ENCODE measurements at regions of chr1 and their contacts with region 1.

Region 1: GRCh38 chr1:165734906-165735305 is 33.8 kb downstream of the TMCO1 start:
- H3K4me3 Mint-ChIP-seq: no peak overlapping the region
- H3K27ac Mint-ChIP-seq: no peak overlapping the region
- H3K4me1 Mint-ChIP-seq: peaks cover 14% of the 10 kb centered on the region
- H3K27me3 Mint-ChIP-seq: no peaks in the 10 kb centered on the region

Region 2: GRCh38 chr1:165666152-165666825 is 68.6 kb before region 1 on chr1:
- intact Hi-C with region 1: no loop called
- H3K4me3 Mint-ChIP-seq: no peak overlapping the region
- H3K27ac Mint-ChIP-seq: no peak overlapping the region
- H3K4me1 Mint-ChIP-seq: peaks cover 34% of the 10 kb centered on the region
- H3K27me3 Mint-ChIP-seq: no peaks in the 10 kb centered on the region

Region 3: DNA sequence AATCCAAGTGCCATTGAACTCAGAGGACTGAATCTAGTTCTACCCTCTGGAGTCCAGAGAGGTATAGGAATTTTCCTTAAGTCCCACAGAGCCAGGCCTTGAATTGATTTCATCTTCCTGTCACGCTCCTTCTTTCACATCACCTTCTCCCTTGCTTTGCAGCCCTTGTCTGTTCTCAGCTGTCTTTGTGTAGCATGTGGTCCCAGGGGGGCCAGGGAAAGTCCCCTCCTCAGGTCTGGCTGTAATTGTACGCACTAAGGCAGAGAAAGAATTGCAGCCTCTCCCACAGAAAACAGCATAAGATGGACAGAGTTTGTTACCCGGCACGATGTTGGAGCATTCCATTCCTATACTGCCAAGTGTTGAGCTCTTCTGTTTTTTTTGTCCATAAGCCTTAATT is 278.3 kb after region 1 on chr1:
- intact Hi-C with region 1: loop called (anchors 5 kb)
- H3K4me3 Mint-ChIP-seq: no peak overlapping the region
- H3K27ac Mint-ChIP-seq: no peak overlapping the region
- H3K4me1 Mint-ChIP-seq: no peaks in the 10 kb centered on the region
- H3K27me3 Mint-ChIP-seq: peaks cover 1% of the 10 kb centered on the region

Measured in dendritic cell treated with granulocyte-macrophage colony-stimulating factor and Interleukin-4, amounts not matched to agents 40 ng/mL and 50 ng/mL, for 4 days (primary cell).